Spleen (tissue), 13 donors: ENCODE measurements at regions of chr14 and their contacts with region 1.

Region 1: DNA sequence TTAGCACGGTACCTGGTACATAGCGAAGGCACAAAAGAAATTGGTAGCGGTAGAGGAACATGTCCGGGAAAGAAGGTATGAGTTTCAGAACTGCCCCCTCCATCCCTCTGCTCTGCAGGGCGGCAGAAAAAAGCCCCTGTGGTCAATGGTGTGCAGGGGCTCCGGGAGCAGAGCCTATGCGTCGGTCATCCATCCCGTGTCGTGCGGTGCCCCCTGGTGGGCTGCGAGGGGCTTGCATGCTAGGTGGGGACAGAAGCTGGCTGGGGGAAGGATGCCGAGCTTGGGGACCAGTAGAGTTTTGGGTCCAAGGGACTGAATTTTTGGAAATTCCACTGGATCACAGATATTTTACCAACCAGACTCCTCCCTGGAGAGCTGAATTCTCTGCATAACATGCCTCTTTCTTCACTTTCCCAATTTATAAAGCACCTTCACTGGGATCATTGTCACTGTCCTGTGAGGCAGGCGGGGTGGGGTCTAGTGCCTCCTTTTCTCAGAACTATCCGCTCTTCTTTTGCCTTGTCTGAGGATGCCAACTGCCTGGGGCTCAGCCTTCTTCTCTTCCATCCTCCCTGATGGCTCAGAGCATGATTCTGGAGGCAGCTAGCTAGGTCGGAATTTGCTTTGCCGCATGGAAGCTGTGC is 148.7 kb downstream of the SMOC1 start:
- DNase-seq: peak; percentile 86
- H3K4me3 ChIP-seq: no peak overlapping the region
- H3K27ac ChIP-seq: no peak overlapping the region
- H3K4me1 ChIP-seq: peaks cover 0 to 6% (median 0%) of the 10 kb centered on the region in 6 donors
- H3K27me3 ChIP-seq: peaks cover 0 to 6% (median 0%) of the 10 kb centered on the region in 7 donors
- CTCF ChIP-seq: peak; percentile 65 to 92 (median 82)
- POLR2A ChIP-seq: no peak

Region 2: GRCh38 chr14:69818757-69819191 is 209.1 kb before region 1 on chr14:
- intact Hi-C with region 1: loop called (anchors 2 kb)
- DNase-seq: no peak
- H3K4me3 ChIP-seq: no peak overlapping the region
- H3K27ac ChIP-seq: no peak overlapping the region
- H3K4me1 ChIP-seq: peaks cover 7 to 16% (median 12%) of the 10 kb centered on the region in 6 donors
- H3K27me3 ChIP-seq: peaks cover 0 to 22% (median 0%) of the 10 kb centered on the region in 7 donors
- CTCF ChIP-seq: peak; percentile 54 to 88 (median 79)
- POLR2A ChIP-seq: no peak

Region 3: DNA sequence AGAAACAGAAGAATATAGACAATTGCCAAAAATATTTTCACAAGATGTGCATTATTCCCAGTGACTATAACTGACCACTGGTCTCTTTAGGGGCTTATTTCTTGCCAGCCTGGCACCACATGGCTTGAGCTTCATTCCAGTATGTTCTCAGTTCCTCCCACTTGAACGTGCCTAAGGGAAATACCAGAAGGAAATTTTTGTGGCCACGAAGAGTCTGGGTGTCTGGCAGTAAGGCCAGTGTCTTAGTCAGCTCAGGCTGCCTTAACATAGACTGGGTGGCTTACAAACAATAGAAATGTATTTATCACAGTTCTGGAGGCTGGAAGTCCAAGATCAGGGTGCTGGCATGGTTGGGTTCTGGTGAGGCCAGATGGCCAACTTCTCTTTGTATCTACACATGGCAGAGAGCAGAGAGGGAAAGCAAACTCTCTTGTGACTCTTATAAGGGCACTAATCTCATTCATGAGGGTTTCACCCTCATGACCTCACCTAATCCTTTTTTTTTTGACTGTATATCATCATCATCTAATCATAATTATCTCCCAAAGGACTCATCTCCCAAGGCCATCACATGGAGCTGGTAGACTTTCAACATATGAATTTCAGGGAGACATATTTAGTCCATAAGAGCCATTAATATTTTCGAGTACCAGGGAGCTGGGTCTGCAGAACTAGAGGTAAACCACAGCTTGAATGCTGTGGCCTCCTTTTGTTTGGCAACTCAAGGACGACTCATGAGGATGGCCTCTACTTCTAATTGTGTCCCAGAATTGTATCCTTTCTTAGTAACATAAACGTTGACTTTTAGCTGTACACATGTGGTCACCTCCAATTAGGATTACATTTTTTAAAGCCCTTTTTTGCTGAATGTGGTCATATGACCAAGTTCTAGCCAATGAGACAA is 153.8 kb before region 1 on chr14:
- intact Hi-C with region 1: no loop called
- DNase-seq: no peak
- H3K4me3 ChIP-seq: no peak overlapping the region
- H3K27ac ChIP-seq: peak overlapping the region in 5 of 8 donors; percentile 11 to 66 (median 44)
- H3K4me1 ChIP-seq: peaks cover 0 to 23% (median 5%) of the 10 kb centered on the region in 6 donors
- H3K27me3 ChIP-seq: peaks cover 0 to 25% (median 10%) of the 10 kb centered on the region in 7 donors
- CTCF ChIP-seq: no peak
- POLR2A ChIP-seq: no peak